ENCODE measurements at regions of chr17 and their contacts with region 1.

Region 1: GRCh38 chr17:42101513-42102319 is 3.4 kb upstream of the ZNF385C start:
- DNase-seq: peak; percentile 63 to 87 (median 78)
- ATAC-seq: peak; percentile 85 to 89 (median 88)
- H3K4me3 ChIP-seq: no peak overlapping the region
- H3K27ac ChIP-seq: no peak overlapping the region
- H3K4me1 ChIP-seq: peaks cover 0 to 12% (median 4%) of the 10 kb centered on the region in 12 donors
- H3K27me3 ChIP-seq: peaks cover 9 to 20% (median 16%) of the 10 kb centered on the region in 9 donors
- CTCF ChIP-seq: peak; percentile 74 to 91 (median 84)
- POLR2A ChIP-seq: no peak

Region 2: DNA sequence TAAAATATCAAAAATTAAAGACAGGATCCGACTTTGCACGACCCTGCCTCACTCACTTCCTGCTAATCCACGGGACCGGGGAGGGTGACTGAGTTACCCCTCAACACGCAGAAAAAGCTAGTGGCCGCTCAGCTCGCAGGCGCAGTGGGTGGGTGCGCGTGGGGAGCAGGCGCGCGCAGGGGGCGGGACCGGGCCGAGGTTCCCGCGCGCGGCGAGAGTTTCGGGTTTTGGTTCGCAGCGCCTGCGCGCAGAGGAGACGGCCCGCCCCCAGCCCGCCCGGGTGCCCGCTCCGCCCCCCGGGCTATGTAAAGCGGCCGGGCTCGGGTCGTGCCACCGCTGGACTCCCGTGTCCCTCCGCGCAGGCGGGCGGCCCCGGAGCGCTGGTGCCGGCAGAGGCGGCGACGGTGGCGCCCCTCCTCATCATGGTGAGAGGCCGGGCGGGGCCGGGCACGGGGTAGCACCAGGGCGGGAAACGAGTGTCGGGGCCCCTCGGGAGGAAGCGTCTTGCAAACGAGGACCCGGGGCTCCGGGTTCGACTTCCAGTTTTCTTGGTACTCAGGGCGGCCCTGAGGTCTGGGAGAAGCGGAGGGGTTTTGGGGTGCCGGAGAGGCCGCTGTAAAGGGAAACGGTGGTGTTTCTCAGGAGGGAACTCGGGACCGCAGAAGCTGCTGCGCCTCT is 135.1 kb before region 1 on chr17 and contains the start of gene CNP:
- intact Hi-C with region 1: loop called in 3 of 10 experiments (anchors 5 kb)
- DNase-seq: peak; percentile 93 to 96 (median 94)
- ATAC-seq: peak; percentile 90 to 95 (median 94)
- H3K4me3 ChIP-seq: peak within 1 kb of the TSS; percentile 64 to 100 (median 90)
- H3K27ac ChIP-seq: peak within 1 kb of the TSS; percentile 59 to 94 (median 86)
- H3K4me1 ChIP-seq: peaks cover 0 to 42% (median 24%) of the 10 kb centered on the region in 12 donors
- H3K27me3 ChIP-seq: no peaks in the 10 kb centered on the region
- CTCF ChIP-seq: no peak
- POLR2A ChIP-seq: peak in 1 of 2 donors; percentile 91
- total RNA-seq, gene CNP: 23.3 to 49.1 (median 27.5) TPM

Region 3: GRCh38 chr17:42027961-42028790 is 73.5 kb before region 1 on chr17:
- intact Hi-C with region 1: loop called in 4 of 10 experiments (anchors 1 to 5 kb)
- DNase-seq: no peak
- ATAC-seq: no peak
- H3K4me3 ChIP-seq: no peak overlapping the region
- H3K27ac ChIP-seq: no peak overlapping the region
- H3K4me1 ChIP-seq: peaks cover 0 to 30% (median 14%) of the 10 kb centered on the region in 12 donors
- H3K27me3 ChIP-seq: peaks cover 0 to 9% (median 0%) of the 10 kb centered on the region in 9 donors
- CTCF ChIP-seq: peak in 2 of 12 donors; percentile 10 to 12
- POLR2A ChIP-seq: no peak

Region 4: GRCh38 chr17:42038221-42038973 is 63.3 kb before region 1 on chr17:
- intact Hi-C with region 1: no loop called
- DNase-seq: no peak
- ATAC-seq: no peak
- H3K4me3 ChIP-seq: no peak overlapping the region
- H3K27ac ChIP-seq: no peak overlapping the region
- H3K4me1 ChIP-seq: peaks cover 0 to 10% (median 0%) of the 10 kb centered on the region in 12 donors
- H3K27me3 ChIP-seq: peaks cover 0 to 17% (median 0%) of the 10 kb centered on the region in 9 donors
- CTCF ChIP-seq: no peak
- POLR2A ChIP-seq: no peak

Region 5: GRCh38 chr17:42212382-42212781 is 110.7 kb after region 1 on chr17:
- intact Hi-C with region 1: no loop called
- DNase-seq: no peak
- ATAC-seq: peak in 2 of 4 donors; percentile 3 to 21
- H3K4me3 ChIP-seq: peak overlapping the region in 1 of 12 donors; percentile 10
- H3K27ac ChIP-seq: peak overlapping the region in 9 of 12 donors; percentile 12 to 64 (median 46)
- H3K4me1 ChIP-seq: peaks cover 0 to 11% (median 0%) of the 10 kb centered on the region in 12 donors
- H3K27me3 ChIP-seq: no peaks in the 10 kb centered on the region
- CTCF ChIP-seq: no peak
- POLR2A ChIP-seq: no peak